HepG2 (cell line): ENCODE measurements at regions of chr14 and their contacts with region 1.

Region 1: DNA sequence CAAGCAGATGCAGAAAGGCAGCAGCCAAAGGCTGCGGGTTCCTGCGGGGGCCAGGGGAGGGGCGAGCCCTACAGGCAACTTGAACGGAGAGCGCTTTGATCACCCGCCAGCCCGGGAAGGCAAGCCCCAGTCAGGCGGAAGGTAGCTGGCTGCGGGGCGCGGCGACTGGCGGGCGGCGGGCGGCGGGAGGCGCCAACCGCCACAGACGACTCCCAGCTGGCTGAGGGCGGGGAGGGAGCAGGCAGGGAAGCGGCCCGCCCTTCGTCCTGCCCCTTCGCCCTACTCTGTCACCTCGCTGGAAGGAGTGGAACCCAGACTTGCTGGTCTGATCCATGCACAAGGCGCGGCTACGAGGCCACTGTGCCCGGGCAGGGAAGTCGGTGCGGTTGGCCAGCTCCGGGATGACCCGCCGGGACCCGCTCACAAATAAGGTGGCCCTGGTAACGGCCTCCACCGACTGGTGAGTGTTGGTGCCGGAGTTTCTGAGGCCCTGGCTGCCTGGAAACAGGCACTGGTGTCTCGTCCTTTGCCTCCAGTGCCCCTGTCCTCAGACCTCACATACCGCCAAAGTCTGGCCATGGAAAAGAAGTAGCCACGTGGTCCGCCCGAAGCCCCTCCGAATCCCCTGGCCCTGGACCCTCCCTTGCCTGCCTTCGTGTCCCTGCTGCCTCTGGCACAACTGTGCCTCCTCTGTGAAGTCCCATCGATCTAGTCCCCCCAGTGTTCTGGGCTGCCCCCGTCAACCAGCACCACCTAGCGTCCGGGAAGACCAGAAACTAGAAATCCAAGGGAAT is 15.4 kb upstream of the CARMIL3 start:
- DNase-seq: peak; percentile 80
- ATAC-seq: peak; percentile 78
- H3K4me3 ChIP-seq: peak overlapping the region; percentile 31 to 68 (median 62); a peak in 5 of 6 replicates
- H3K27ac ChIP-seq: peak overlapping the region; percentile 57
- H3K4me1 ChIP-seq: peaks cover 43% of the 10 kb centered on the region
- H3K27me3 ChIP-seq: peaks cover 0 to 4% of the 10 kb centered on the region in 2 experiments; a peak in 1 of 5 replicates
- CTCF ChIP-seq: peak; percentile 98
- EP300 ChIP-seq: peak in 1 of 2 experiments; percentile 46; a peak in 1 of 4 replicates
- POLR2A ChIP-seq: peak; percentile 70 to 84
- RAD21 ChIP-seq: peak; percentile 87

Region 2: DNA sequence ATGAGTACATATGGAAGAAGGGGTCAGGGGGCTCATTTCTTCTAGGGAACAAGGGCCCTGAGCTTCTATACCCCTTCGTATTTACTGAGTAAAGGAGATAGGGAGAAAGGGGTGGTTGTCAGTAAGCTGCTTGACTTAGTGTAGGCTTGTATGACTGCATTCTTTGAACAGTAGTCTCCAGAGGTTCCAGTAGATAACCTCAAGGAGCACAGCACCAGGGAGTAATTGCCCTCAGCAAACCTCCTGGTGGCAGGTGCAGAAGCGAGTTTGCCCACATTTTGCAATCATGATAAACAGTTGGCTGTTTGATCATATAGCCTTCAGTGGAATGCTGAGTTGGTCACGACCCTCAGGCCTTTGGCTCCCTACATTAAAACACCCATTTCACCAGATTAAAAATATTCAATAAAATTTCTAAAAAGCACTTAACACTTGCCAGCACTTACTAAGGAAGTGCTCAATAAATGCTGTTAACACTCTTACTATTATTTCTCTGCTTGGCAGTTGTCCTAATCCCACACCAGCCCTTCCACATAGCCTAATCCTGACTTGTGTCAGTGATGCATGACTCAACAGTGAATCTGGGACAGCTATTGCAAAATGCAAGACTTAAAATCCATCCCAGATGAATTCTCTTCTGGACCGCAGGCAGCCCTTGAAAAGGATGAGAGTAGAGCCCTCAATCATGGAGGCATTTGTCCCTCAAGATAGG is 51.3 kb before region 1 on chr14:
- CTCF ChIA-PET with region 1: no interaction called
- POLR2A ChIA-PET with region 1: interaction called, 4 read pairs
- in situ Hi-C with region 1: loop called (anchors 10 kb)
- intact Hi-C with region 1: no loop called
- DNase-seq: peak; percentile 36
- ATAC-seq: no peak
- H3K4me3 ChIP-seq: no peak overlapping the region
- H3K27ac ChIP-seq: no peak overlapping the region
- H3K4me1 ChIP-seq: peaks cover 82% of the 10 kb centered on the region
- H3K27me3 ChIP-seq: no peaks in the 10 kb centered on the region
- CTCF ChIP-seq: no peak
- EP300 ChIP-seq: no peak
- POLR2A ChIP-seq: no peak
- RAD21 ChIP-seq: no peak

Region 3: GRCh38 chr14:24086193-24086955 is 50.0 kb after region 1 on chr14:
- CTCF ChIA-PET with region 1: interaction called, 4 read pairs
- POLR2A ChIA-PET with region 1: interaction called, 3 read pairs
- in situ Hi-C with region 1: no loop called
- intact Hi-C with region 1: loop called (anchors 1 kb)
- DNase-seq: no peak
- ATAC-seq: no peak
- H3K4me3 ChIP-seq: no peak overlapping the region
- H3K27ac ChIP-seq: no peak overlapping the region
- H3K4me1 ChIP-seq: peaks cover 39% of the 10 kb centered on the region
- H3K27me3 ChIP-seq: peaks cover 10 to 45% of the 10 kb centered on the region in 2 experiments
- CTCF ChIP-seq: no peak
- EP300 ChIP-seq: no peak
- POLR2A ChIP-seq: no peak
- RAD21 ChIP-seq: no peak

Region 4: GRCh38 chr14:24366721-24367513 is 330.6 kb after region 1 on chr14:
- CTCF ChIA-PET with region 1: no interaction called
- POLR2A ChIA-PET with region 1: no interaction called
- in situ Hi-C with region 1: no loop called
- intact Hi-C with region 1: no loop called
- DNase-seq: peak; percentile 92
- ATAC-seq: peak; percentile 83
- H3K4me3 ChIP-seq: peak overlapping the region; percentile 71 to 80 (median 74)
- H3K27ac ChIP-seq: no peak overlapping the region
- H3K4me1 ChIP-seq: peaks cover 26% of the 10 kb centered on the region
- H3K27me3 ChIP-seq: peaks cover 20 to 54% of the 10 kb centered on the region in 2 experiments
- CTCF ChIP-seq: no peak; the same call in 1 of the 2 replicates
- EP300 ChIP-seq: peak in 1 of 2 experiments; percentile 29; a peak in 1 of 4 replicates
- POLR2A ChIP-seq: no peak
- RAD21 ChIP-seq: no peak